ENCODE measurements at regions of chr6 and their contacts with region 1.

Region 1: DNA sequence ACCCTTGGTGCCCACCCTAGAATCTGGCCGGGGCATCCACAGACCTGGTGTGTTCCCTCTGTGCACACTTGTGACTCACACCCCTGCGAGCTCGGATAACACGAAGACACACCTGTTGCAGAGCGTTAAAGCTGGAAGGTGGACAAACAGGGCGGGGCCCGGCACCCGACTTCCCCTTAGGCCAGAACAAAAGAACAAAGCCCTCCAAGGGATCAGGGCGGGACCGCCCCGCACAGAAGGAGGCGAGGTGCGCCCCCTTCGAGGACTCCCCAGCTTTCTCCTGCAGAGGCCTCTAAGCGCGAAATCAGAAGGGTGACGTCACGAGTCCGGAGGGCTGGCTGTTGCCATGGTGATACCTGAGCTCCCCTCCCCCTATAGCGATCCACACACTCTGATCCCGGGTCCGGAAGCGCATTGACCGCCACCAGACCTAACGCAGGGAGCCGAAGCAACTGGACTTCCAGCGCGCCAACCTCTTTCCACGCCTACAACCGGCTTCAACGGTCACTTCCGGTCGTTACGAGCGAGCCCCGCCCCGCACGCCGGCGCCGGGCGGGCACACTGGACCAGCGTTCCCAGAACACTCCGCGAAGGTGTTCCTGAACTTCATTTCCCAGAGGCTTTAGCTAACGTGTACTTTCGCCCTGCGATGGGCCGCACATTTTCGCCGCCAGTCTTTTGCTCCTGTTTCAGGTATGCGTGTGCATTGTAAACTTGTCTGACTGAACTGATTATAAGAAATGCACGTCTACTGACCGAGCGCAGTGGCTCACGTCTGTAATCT is at the start of gene ZNF184:
- DNase-seq: peak; percentile 98
- ATAC-seq: peak; percentile 88
- H3K4me3 ChIP-seq: peak within 1 kb of the TSS; percentile 93
- H3K27ac ChIP-seq: peak within 1 kb of the TSS; percentile 86
- H3K4me1 ChIP-seq: peaks cover 26% of the 10 kb centered on the region
- H3K27me3 ChIP-seq: no peaks in the 10 kb centered on the region
- CTCF ChIP-seq: no peak
- total RNA-seq, gene ZNF184: 7.0 and 10.2 TPM in 2 replicates

Region 2: DNA sequence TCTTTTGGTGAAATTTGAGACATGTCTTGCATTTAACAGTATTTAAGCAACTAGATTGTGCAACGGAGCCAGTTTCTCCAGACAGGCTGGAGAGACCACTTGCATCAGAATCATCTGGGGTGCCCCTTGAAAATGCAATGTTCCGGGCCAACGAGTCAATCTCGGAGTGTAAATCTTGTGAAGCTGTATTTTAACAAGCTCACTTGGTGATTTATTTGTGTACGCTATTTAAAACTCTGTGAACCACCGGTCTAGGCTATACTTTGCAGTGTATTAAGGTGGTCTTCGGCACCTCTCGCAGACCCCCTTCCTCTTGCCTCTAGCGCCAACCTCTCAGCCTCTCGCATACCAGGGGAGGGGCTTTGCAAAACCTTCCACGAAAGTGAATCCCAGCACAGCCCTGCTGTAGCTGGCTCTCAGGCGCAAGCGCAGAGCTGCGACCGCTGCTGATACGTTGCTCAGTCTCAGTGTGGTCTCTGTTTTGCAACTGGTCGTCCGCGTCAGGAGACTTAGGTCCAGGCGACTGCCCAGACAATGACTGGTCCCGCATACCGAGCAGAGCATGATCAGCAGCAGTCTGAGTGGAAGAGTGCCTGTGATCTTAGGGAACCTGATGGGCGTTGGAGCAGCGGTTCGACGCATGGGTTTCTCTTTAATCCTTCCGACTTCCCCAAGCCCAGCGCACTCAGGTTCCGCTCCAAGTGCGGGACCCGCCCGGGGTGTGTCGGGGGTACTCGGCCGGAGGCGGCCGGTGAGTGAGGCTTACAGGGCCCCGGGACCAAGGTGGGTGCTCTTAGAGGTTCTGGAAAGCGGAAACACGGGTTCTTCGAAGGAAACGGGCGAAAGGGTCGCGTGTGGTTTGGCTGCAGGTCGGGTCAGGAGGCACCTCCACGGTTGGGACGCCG is 84.3 kb before region 1 on chr6 and contains the start of gene ZNF391:
- CTCF ChIA-PET with region 1: no interaction called
- POLR2A ChIA-PET with region 1: no interaction called
- intact Hi-C with region 1: loop called (anchors 2 kb)
- DNase-seq: peak; percentile 79
- ATAC-seq: peak; percentile 94
- H3K4me3 ChIP-seq: peak within 1 kb of the TSS; percentile 86
- H3K27ac ChIP-seq: peak within 1 kb of the TSS; percentile 62
- H3K4me1 ChIP-seq: peaks cover 9% of the 10 kb centered on the region
- H3K27me3 ChIP-seq: no peaks in the 10 kb centered on the region
- CTCF ChIP-seq: no peak
- total RNA-seq, gene ZNF391: 1.7 and 5.9 TPM in 2 replicates

Region 3: GRCh38 chr6:27460701-27461100 is 12.1 kb before region 1 on chr6:
- CTCF ChIA-PET with region 1: no interaction called
- POLR2A ChIA-PET with region 1: no interaction called
- intact Hi-C with region 1: no loop called
- DNase-seq: no peak
- ATAC-seq: no peak
- H3K4me3 ChIP-seq: no peak overlapping the region
- H3K27ac ChIP-seq: no peak overlapping the region
- H3K4me1 ChIP-seq: no peaks in the 10 kb centered on the region
- H3K27me3 ChIP-seq: no peaks in the 10 kb centered on the region
- CTCF ChIP-seq: no peak

Region 4: DNA sequence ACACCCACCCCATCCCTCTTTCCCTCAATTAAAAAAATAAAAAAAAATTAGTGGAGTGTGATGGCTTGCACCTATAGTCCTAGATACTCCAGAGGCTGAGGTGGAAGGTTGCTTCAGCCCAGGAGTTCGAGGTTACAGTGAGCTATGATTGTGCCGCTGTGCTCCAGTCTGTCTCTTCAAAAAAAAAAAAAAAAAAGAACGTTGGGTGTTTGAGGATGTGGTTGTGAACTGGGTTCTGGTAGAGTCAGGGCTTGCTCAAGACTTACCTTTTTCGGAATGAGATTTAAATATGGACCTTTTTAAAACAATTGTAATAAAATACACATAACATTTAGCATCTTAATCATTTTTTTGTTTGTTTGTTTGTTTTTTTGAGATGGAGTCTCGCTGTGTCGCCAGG is 227.5 kb after region 1 on chr6:
- CTCF ChIA-PET with region 1: no interaction called
- POLR2A ChIA-PET with region 1: no interaction called
- intact Hi-C with region 1: no loop called
- DNase-seq: no peak
- ATAC-seq: no peak
- H3K4me3 ChIP-seq: no peak overlapping the region
- H3K27ac ChIP-seq: no peak overlapping the region
- H3K4me1 ChIP-seq: no peaks in the 10 kb centered on the region
- H3K27me3 ChIP-seq: no peaks in the 10 kb centered on the region
- CTCF ChIP-seq: no peak

Measured in PC-3 (cell line).